Posterior cingulate gyrus (tissue), 11 donors: ENCODE measurements at regions of chr5 and their contacts with region 1.

Region 1: DNA sequence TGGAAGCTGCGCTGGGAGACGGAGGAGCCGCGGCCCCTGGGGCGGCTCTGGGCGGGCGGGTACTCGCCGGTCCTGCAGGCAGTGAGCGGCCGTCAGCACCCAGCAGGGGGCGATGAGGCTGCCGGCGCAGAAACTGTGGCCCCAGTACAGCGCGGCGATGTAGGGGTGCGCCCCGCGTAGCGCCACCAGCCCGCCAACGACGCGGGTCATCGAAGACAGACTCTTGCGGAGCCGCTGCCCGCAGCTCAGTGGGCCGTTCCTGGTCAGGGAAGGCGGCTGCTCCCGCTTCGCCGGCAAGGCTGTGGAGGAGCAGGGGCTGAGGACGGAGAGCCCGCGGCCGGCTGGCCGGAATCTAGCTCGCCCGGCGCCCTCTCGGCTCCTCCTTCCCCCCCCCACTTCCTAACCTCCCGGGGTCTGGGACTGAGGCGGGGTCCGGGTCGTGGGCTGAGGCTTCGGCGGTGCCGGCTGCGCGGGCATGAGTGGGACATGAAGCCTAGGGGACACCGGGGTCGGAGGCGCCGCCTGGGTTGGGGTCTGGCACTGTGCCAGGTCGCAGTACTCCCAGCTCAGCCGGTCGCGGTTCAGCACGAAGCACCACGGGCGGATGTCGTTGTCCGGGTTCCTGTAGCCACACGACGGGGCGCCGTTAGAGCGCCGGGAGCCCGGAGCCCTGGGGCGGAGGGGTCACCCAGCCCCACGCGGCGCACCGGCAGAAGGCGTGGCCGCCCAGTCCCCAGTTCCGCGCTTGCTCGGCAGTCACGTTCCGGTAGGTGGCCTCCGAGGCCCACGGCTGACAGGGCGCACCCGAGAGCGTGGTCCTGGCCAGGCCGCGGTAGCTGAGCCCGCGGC is 3.6 kb upstream of the PFN3 start:
- DNase-seq: peak; percentile 59 to 96 (median 76)

Region 2: DNA sequence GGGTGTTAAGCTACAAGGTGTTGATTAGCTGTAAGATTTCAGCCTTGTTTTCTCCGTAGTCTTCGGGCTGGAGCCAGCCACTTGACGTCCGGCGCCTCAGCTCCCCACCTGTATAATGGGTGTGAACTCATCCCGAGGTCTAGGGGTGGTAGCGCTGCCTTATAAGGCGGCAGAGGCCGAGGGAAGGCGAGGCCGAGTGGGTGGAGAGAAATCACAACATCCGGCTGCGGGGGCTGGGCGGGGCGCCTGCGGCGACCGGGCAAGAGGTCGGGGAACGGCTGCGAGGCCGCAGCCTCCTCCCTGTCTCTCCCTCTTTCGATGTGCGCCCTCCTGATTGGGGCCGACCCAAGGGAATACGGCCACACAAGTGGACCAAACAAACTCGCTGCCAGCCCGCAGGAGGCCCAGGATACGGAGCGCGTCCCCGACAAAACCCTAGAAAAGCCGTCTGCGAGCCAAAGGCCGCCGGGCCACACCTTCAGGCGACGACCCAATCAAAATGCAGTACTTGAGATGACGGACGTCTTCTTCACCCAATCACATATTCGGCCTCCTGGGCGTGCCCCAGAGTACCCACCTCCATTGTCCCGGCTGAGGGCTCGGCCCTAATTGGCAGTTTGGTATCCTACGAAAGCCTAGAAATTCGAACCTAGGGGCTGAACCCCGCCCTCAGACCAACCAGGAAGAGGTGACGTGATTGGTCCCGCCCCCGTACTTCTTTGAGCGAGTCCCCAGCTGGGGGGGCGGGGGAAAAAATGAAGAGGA is 22.0 kb after region 1 on chr5:
- intact Hi-C with region 1: loop called (anchors 2 kb)
- DNase-seq: peak; percentile 99 to 100 (median 100)

Region 3: DNA sequence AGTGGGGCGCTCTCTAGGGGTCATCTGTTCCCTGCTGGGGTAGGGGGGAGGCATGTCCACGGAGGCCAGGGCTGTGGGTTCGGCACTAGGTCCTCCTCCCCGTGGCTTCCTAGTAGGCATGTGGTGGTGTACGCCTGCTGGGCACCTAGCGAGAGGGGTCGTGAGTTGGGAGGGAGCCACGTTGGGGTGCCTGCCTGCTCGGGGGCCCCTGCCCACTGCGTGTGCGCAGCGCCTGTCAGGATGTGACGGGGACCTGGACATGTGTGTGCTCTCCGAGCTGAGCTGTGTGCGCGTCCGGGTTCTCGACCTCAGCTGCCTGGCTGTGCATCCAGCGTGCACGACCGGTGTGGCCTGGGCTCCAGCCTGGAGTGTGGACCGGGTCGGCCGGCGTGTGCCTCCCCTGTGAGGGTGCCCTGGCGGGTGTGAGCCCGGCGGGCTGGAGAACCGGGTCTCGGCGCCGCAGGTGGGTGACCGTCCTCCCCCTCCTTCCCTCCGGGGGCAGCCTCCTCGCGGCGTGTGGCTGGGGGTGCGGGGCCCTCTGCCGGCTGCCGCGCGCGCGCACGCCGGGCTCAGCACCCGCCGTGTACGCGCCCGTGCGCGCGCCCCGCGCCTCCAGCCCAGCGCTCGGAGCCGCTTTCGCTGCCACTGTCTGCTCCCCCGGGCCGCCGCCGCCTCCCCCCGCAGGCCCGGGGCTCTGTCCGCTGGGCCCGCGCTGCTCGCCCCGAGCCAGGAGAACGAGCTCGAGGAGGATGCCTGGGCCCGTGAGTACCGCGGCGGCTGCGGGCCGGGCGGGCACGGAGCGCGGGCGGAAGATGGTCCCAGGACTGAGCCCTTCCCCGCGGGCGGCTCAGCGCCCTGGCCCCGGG is 42.4 kb after region 1 on chr5 and contains the start of gene PRR7:
- intact Hi-C with region 1: loop called (anchors 2 kb)
- DNase-seq: peak in 9 of 10 donors; percentile 59 to 97 (median 76)

Region 4: GRCh38 chr5:177454397-177455035 is 50.5 kb after region 1 on chr5:
- intact Hi-C with region 1: loop called (anchors 1 kb)
- DNase-seq: peak; percentile 80 to 98 (median 90)

Region 5: GRCh38 chr5:177497292-177498033 is 93.4 kb after region 1 on chr5 and contains the start of gene PDLIM7:
- intact Hi-C with region 1: loop called (anchors 5 kb)
- DNase-seq: peak; percentile 67 to 98 (median 86)